ENCODE measurements at regions of chr2 and their contacts with region 1.

Region 1: DNA sequence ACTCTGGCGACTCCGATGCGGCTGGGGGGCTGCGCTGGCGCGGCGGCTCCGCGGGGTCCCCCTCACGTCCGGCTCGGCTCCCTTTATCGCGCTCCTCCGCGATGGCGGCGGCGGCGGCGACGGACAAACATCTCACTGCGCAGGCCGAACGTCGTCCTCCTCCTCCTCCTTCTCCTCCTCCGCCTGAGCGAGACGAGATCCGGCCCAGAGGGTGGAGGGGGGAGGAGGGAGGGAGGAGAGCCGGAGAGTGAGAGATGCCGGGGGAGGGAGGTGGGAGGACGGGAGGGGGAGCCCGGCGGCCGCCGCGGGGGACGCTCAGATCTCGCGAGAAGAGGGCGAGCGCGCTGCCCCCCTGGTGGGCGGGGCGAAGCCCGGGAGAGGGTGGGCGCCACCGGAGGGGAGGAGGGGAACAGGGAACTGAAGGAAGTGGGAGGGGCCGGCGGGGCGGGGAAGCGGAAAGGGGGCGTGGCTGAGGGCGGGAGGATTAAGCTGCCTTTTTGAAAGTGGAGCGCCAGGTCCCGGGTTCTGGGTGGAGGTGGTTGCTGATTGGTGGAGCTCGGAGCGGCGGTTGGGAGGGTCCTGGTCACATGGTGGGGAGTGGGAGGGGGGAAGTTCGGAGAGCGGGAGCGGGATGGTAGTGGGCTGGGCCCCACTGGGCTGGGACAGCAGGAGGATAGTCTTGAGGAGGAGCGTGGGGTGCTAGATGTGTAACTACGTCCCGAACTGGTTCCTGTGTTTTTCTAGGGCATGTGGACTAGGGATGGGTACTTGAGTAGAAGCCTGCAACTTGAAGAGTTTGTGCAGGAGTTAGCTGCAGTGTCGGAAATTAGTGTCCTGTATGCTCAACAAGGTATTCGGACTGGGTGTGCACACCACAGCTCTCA is at the start of gene CUL3:
- DNase-seq: peak; percentile 97
- ATAC-seq: peak; percentile 98
- H3K4me3 ChIP-seq: peak within 1 kb of the TSS; percentile 87 to 92 (median 89)
- H3K27ac ChIP-seq: peak within 1 kb of the TSS; percentile 81
- H3K4me1 ChIP-seq: peaks cover 33% of the 10 kb centered on the region
- H3K27me3 ChIP-seq: no peaks in the 10 kb centered on the region; a peak in 1 of 5 replicates
- CTCF ChIP-seq: no peak
- EP300 ChIP-seq: 0 out of 4 replicates have a peak, but pooled peaks have one; percentile 29 to 30
- POLR2A ChIP-seq: peak; percentile 90 to 96
- RAD21 ChIP-seq: no peak
- total RNA-seq, gene CUL3: 62.3 and 97.3 TPM in 2 replicates

Region 2: GRCh38 chr2:224492531-224492930 is 92.9 kb before region 1 on chr2:
- CTCF ChIA-PET with region 1: no interaction called
- POLR2A ChIA-PET with region 1: no interaction called
- in situ Hi-C with region 1: no loop called
- intact Hi-C with region 1: loop called (anchors 5 kb)
- DNase-seq: no peak
- ATAC-seq: no peak
- H3K4me3 ChIP-seq: no peak overlapping the region
- H3K27ac ChIP-seq: no peak overlapping the region
- H3K4me1 ChIP-seq: peaks cover 22% of the 10 kb centered on the region
- H3K27me3 ChIP-seq: no peaks in the 10 kb centered on the region; a peak in 1 of 5 replicates
- CTCF ChIP-seq: no peak
- EP300 ChIP-seq: no peak
- POLR2A ChIP-seq: no peak
- RAD21 ChIP-seq: no peak

Region 3: DNA sequence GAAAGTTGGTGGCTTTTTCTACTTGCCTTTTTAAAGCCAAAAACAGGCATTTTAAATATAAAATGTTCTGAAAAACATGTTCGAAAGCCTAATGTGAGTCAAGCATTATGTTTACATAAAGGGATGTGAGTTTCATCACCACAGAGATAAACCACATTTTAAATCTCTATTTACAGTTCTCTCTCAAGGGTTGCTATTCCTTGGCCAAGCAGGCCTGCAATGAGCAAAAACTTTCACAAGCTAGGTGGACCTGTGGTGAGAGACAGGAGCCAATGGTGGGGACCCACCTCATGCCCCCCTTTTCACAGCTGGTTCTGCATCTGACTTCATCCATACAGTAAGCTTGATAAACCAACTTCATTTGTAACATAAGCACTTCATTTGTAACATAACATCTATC is 65.4 kb before region 1 on chr2:
- CTCF ChIA-PET with region 1: no interaction called
- POLR2A ChIA-PET with region 1: interaction called, 3 read pairs
- in situ Hi-C with region 1: no loop called
- intact Hi-C with region 1: loop called (anchors 5 kb)
- DNase-seq: peak; percentile 12
- ATAC-seq: peak; percentile 51
- H3K4me3 ChIP-seq: no peak overlapping the region
- H3K27ac ChIP-seq: no peak overlapping the region
- H3K4me1 ChIP-seq: peaks cover 25% of the 10 kb centered on the region
- H3K27me3 ChIP-seq: no peaks in the 10 kb centered on the region
- CTCF ChIP-seq: no peak
- EP300 ChIP-seq: no peak
- POLR2A ChIP-seq: no peak
- RAD21 ChIP-seq: no peak

Measured in HepG2 (cell line).